ENCODE measurements at regions of chr5 and their contacts with region 1.

Region 1: DNA sequence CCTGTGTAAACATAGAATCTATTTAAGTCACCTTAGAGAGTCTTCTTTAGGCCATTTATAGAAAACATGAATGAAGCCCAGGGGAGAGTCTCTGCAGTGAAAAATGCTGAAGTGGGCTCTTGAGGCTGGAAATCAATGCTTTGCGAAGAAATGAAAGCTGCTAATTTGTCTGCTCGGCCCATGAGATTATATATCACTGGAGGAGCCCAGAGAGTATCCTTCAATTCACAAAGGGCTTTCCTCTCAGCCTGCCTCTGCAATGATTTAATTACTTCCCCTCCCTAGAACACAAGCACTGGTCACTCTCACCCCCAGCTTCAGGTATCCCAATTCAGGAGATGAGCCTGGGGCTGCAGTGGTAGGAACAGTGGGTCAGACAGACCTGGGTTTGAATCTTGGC is 8.2 kb upstream of the DRD1 start:
- DNase-seq: no peak
- H3K4me3 ChIP-seq: no peak overlapping the region
- H3K27ac ChIP-seq: no peak overlapping the region
- H3K4me1 ChIP-seq: no peaks in the 10 kb centered on the region
- H3K27me3 ChIP-seq: peaks cover 0 to 4% of the 10 kb centered on the region in 2 experiments
- CTCF ChIP-seq: no peak
- POLR2A ChIP-seq: no peak

Region 2: GRCh38 chr5:175434800-175435199 is 17.4 kb before region 1 on chr5:
- CTCF ChIA-PET with region 1: no interaction called
- POLR2A ChIA-PET with region 1: no interaction called
- dilution Hi-C with region 1: no loop called
- intact Hi-C with region 1: no loop called
- DNase-seq: no peak
- H3K4me3 ChIP-seq: no peak overlapping the region
- H3K27ac ChIP-seq: no peak overlapping the region
- H3K4me1 ChIP-seq: no peaks in the 10 kb centered on the region
- H3K27me3 ChIP-seq: no peaks in the 10 kb centered on the region
- CTCF ChIP-seq: no peak
- POLR2A ChIP-seq: no peak

Region 3: GRCh38 chr5:175464074-175464941 is 12.1 kb after region 1 on chr5:
- CTCF ChIA-PET with region 1: interaction called, 16 read pairs
- POLR2A ChIA-PET with region 1: no interaction called
- dilution Hi-C with region 1: no loop called
- intact Hi-C with region 1: no loop called
- DNase-seq: peak; percentile 37
- H3K4me3 ChIP-seq: no peak overlapping the region
- H3K27ac ChIP-seq: no peak overlapping the region
- H3K4me1 ChIP-seq: no peaks in the 10 kb centered on the region
- H3K27me3 ChIP-seq: peaks cover 0 to 1% of the 10 kb centered on the region in 2 experiments
- CTCF ChIP-seq: peak; percentile 45 to 62
- POLR2A ChIP-seq: no peak

Measured in endothelial cell of umbilical vein (primary cell).